Endothelial cell of umbilical vein (primary cell): ENCODE measurements at regions of chr11 and their contacts with region 1.

Region 1: DNA sequence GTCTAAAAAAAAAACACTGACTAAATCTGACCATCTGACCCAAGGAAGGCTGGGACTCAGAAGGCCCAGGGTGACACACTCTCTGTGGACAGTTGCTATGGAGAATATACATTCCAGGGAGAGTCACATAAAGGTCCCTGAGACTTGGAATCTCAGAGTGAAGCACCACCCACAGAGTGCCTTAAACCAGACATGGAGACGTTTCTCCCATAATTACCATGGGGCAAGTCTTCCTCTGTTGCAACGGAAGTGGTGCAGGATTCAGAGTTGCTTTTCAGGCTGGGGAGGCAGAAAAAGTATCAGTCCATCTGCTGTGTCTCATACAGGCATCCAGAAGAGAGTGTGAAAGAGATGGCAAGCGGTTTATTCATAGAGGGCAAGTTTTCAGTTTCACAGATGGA is 58.7 kb upstream of the SLN start:
- DNase-seq: no peak
- H3K4me3 ChIP-seq: no peak overlapping the region
- H3K27ac ChIP-seq: no peak overlapping the region
- H3K4me1 ChIP-seq: no peaks in the 10 kb centered on the region
- H3K27me3 ChIP-seq: peaks cover 2 to 4% of the 10 kb centered on the region in 2 experiments
- CTCF ChIP-seq: no peak
- POLR2A ChIP-seq: no peak

Region 2: DNA sequence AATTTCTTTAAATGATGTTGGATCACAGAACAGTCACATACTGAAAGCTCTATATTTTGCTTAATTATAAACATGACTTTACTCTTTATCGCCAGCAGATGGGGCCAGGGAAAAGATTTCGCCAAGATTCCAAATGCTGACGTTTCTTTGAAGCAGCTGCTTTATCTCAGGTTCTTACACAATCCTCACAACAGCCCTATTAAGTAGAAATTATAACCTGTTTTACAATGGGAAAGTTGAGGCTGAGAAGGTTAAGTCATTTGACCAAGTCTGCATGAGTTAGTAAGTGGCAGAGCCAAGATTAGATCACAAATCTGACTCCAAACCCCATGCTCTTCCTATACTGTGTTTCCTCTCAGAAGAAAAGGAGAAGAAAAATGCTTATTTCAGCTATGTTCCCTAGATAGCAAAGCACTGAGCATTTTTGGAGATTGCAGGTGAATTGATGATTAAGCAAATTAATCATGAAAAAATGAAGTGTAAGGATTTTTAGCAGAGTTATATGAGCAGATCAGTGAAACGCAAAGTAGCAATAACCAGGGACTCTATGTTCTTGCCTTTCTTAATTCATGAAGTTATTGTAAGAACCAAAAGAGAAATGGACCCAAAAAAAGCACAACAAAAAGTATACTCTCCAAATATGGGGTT is 1614.1 kb before region 1 on chr11:
- CTCF ChIA-PET with region 1: interaction called, 10 read pairs
- POLR2A ChIA-PET with region 1: no interaction called
- dilution Hi-C with region 1: no loop called
- intact Hi-C with region 1: no loop called
- DNase-seq: peak; percentile 37
- H3K4me3 ChIP-seq: no peak overlapping the region
- H3K27ac ChIP-seq: no peak overlapping the region
- H3K4me1 ChIP-seq: no peaks in the 10 kb centered on the region
- H3K27me3 ChIP-seq: no peaks in the 10 kb centered on the region
- CTCF ChIP-seq: peak; percentile 13 to 24
- POLR2A ChIP-seq: no peak

Region 3: GRCh38 chr11:107473792-107474191 is 296.8 kb before region 1 on chr11:
- CTCF ChIA-PET with region 1: no interaction called
- POLR2A ChIA-PET with region 1: no interaction called
- dilution Hi-C with region 1: no loop called
- intact Hi-C with region 1: no loop called
- DNase-seq: no peak
- H3K4me3 ChIP-seq: no peak overlapping the region
- H3K27ac ChIP-seq: no peak overlapping the region
- H3K4me1 ChIP-seq: no peaks in the 10 kb centered on the region
- H3K27me3 ChIP-seq: peaks cover 5 to 10% of the 10 kb centered on the region in 2 experiments
- CTCF ChIP-seq: no peak
- POLR2A ChIP-seq: no peak

Region 4: GRCh38 chr11:107573438-107573837 is 197.1 kb before region 1 on chr11:
- CTCF ChIA-PET with region 1: interaction called, 16 read pairs
- POLR2A ChIA-PET with region 1: no interaction called
- dilution Hi-C with region 1: no loop called
- intact Hi-C with region 1: loop called (anchors 1 kb)
- DNase-seq: no peak
- H3K4me3 ChIP-seq: no peak overlapping the region
- H3K27ac ChIP-seq: no peak overlapping the region
- H3K4me1 ChIP-seq: no peaks in the 10 kb centered on the region
- H3K27me3 ChIP-seq: no peaks in the 10 kb centered on the region
- CTCF ChIP-seq: no peak
- POLR2A ChIP-seq: no peak

Region 5: DNA sequence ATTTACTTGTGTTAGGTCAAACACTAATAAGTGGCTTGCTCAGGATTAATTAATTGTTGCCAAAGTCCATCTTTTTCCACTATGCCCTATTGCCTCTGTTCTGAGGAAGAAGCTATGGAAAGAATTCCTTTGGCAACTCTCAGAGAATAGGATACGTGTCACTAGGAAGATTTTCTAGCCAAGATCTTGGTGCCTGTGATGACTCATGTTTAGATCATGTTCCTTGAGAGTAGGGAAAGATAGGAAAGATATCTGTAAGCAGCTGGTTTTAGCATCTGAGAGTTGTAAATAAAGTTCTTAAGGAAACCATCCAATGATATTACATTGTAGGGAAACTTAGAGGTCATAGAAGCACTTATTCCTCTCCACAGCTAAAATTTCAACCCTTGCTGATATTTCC is 74.4 kb before region 1 on chr11:
- CTCF ChIA-PET with region 1: interaction called, 13 read pairs
- POLR2A ChIA-PET with region 1: no interaction called
- dilution Hi-C with region 1: no loop called
- intact Hi-C with region 1: no loop called
- DNase-seq: peak; percentile 90
- H3K4me3 ChIP-seq: no peak overlapping the region
- H3K27ac ChIP-seq: peak overlapping the region; percentile 15
- H3K4me1 ChIP-seq: peaks cover 16% of the 10 kb centered on the region
- H3K27me3 ChIP-seq: no peaks in the 10 kb centered on the region
- CTCF ChIP-seq: no peak
- POLR2A ChIP-seq: no peak

Region 6: DNA sequence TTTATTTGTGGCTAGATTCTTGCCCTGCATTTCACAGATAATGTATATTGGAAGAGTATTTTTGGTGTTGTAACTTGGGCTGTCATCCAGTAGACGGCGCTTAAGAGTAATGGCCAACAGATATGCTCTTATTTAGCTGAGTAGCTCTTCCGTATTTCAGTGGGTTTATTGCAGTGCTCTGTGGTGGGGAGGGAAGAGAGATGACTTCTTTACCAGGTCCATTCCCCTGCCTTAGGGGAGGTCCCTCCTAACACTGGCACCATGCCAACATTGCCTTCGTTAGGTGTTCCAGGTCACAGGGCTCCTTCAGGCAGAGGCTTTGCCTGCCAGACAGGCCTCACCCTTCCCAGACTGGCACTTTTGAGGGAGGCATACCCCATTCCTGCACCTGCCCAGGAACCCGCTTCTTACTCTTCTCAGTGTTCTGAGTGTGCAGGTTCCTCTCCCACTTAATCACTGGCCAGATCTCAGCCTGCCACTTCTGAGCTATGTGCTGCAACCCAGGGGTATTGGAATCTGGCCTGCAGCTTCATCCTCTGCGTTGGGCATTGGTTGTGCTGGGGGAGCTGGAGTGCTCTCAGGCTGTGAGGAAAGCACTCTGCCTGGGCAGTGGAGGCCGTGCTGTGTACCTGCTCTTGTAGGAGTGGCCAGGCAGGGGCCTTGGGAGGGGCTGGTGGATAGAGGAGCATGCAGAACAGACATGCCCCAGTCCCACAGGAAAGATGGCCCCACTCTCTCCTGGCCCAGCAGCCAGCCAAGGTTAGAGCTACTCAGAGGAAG is 29.3 kb before region 1 on chr11:
- CTCF ChIA-PET with region 1: interaction called, 48 read pairs
- POLR2A ChIA-PET with region 1: interaction called, 3 read pairs
- dilution Hi-C with region 1: no loop called
- intact Hi-C with region 1: loop called (anchors 1 kb)
- DNase-seq: peak; percentile 48
- H3K4me3 ChIP-seq: no peak overlapping the region
- H3K27ac ChIP-seq: no peak overlapping the region
- H3K4me1 ChIP-seq: no peaks in the 10 kb centered on the region
- H3K27me3 ChIP-seq: peaks cover 5 to 20% of the 10 kb centered on the region in 2 experiments
- CTCF ChIP-seq: peak; percentile 63 to 73
- POLR2A ChIP-seq: no peak

Region 7: DNA sequence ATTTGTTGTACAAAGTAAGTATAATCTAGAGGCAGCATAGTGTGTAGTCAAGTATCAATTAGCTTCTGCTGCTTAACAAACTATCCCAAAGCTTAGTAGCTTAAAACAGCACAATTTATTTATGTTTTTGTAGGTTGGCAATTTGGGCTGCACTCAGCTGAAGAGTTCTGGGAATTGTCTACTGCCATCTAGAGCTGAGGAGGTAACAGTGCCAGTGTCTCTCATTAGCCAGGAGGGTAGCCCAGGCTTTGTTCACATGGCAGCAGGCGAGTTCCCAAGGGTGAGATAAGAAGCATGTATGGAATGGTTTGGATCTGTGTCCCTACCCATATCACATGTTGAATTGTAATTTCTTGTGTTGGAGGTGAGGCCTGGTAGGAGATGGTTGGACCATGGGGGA is 12.9 kb before region 1 on chr11:
- CTCF ChIA-PET with region 1: interaction called, 10 read pairs
- POLR2A ChIA-PET with region 1: no interaction called
- dilution Hi-C with region 1: no loop called
- intact Hi-C with region 1: no loop called
- DNase-seq: no peak
- H3K4me3 ChIP-seq: no peak overlapping the region
- H3K27ac ChIP-seq: no peak overlapping the region
- H3K4me1 ChIP-seq: no peaks in the 10 kb centered on the region
- H3K27me3 ChIP-seq: peaks cover 3 to 6% of the 10 kb centered on the region in 2 experiments
- CTCF ChIP-seq: no peak
- POLR2A ChIP-seq: no peak

Region 8: GRCh38 chr11:108497317-108498045 is 726.9 kb after region 1 on chr11:
- CTCF ChIA-PET with region 1: no interaction called
- POLR2A ChIA-PET with region 1: no interaction called
- dilution Hi-C with region 1: no loop called
- intact Hi-C with region 1: no loop called
- DNase-seq: peak; percentile 99
- H3K4me3 ChIP-seq: peak overlapping the region; percentile 26 to 71 (median 48)
- H3K27ac ChIP-seq: peak overlapping the region; percentile 81
- H3K4me1 ChIP-seq: peaks cover 10% of the 10 kb centered on the region
- H3K27me3 ChIP-seq: no peaks in the 10 kb centered on the region
- CTCF ChIP-seq: no peak
- POLR2A ChIP-seq: peak; percentile 89